GM12878 (cell line): ENCODE measurements at regions of chr12 and their contacts with region 1.

Region 1: DNA sequence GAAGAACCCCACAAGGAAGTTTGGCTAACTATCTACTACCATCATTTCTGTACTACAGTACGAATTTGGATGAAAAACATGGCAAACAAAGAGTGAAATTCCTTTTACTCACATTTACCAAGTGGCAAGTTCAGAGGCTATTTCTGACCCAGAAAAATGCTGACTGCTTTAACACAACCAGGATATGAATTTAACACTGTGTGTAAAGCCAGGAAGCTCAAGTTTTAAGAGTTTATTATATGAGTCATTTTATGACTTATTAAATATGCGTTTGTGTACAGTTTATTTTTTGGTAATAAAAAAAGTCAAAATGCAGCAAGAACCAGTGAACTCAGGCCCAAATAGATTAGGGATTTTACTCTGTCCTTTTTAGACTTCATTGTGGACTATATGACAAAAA is 58.4 kb upstream of the STAC3 start:
- DNase-seq: no peak
- ATAC-seq: no peak
- H3K4me3 ChIP-seq: no peak overlapping the region
- H3K27ac ChIP-seq: no peak overlapping the region
- H3K4me1 ChIP-seq: no peaks in the 10 kb centered on the region
- H3K27me3 ChIP-seq: no peaks in the 10 kb centered on the region
- CTCF ChIP-seq: no peak
- EP300 ChIP-seq: no peak
- POLR2A ChIP-seq: no peak
- RAD21 ChIP-seq: no peak

Region 2: GRCh38 chr12:57229634-57230380 is 79.6 kb before region 1 on chr12 and contains the start of gene SHMT2:
- CTCF ChIA-PET with region 1: no interaction called
- POLR2A ChIA-PET with region 1: no interaction called
- RAD21 ChIA-PET with region 1: no interaction called
- SMC1A ChIA-PET with region 1: no interaction called
- in situ Hi-C with region 1: no loop called
- intact Hi-C with region 1: no loop called
- DNase-seq: peak; percentile 93
- ATAC-seq: peak; percentile 79
- H3K4me3 ChIP-seq: peak within 1 kb of the TSS; percentile 79
- H3K27ac ChIP-seq: peak within 1 kb of the TSS; percentile 93
- H3K4me1 ChIP-seq: peaks cover 31% of the 10 kb centered on the region
- H3K27me3 ChIP-seq: peaks cover 2 to 4% of the 10 kb centered on the region in 2 experiments; a peak in 3 of 4 replicates
- CTCF ChIP-seq: no peak
- EP300 ChIP-seq: no peak
- POLR2A ChIP-seq: peak; percentile 82
- RAD21 ChIP-seq: no peak
- polyA plus RNA-seq, gene SHMT2: 57.0 to 65.6 TPM

Region 3: GRCh38 chr12:57280211-57281062 is 29.0 kb before region 1 on chr12:
- CTCF ChIA-PET with region 1: interaction called, 11 read pairs
- POLR2A ChIA-PET with region 1: interaction called, 9 read pairs
- RAD21 ChIA-PET with region 1: interaction called, 4 read pairs
- SMC1A ChIA-PET with region 1: interaction called, 4 read pairs
- in situ Hi-C with region 1: no loop called
- intact Hi-C with region 1: no loop called
- DNase-seq: peak; percentile 74
- ATAC-seq: peak; percentile 99
- H3K4me3 ChIP-seq: no peak overlapping the region
- H3K27ac ChIP-seq: peak overlapping the region; percentile 61
- H3K4me1 ChIP-seq: peaks cover 12% of the 10 kb centered on the region
- H3K27me3 ChIP-seq: no peaks in the 10 kb centered on the region
- CTCF ChIP-seq: no peak
- EP300 ChIP-seq: 0 out of 4 replicates have a peak, but pooled peaks of 1 of the 2 experiments have one; percentile 6
- POLR2A ChIP-seq: peak; percentile 79
- RAD21 ChIP-seq: no peak

Region 4: DNA sequence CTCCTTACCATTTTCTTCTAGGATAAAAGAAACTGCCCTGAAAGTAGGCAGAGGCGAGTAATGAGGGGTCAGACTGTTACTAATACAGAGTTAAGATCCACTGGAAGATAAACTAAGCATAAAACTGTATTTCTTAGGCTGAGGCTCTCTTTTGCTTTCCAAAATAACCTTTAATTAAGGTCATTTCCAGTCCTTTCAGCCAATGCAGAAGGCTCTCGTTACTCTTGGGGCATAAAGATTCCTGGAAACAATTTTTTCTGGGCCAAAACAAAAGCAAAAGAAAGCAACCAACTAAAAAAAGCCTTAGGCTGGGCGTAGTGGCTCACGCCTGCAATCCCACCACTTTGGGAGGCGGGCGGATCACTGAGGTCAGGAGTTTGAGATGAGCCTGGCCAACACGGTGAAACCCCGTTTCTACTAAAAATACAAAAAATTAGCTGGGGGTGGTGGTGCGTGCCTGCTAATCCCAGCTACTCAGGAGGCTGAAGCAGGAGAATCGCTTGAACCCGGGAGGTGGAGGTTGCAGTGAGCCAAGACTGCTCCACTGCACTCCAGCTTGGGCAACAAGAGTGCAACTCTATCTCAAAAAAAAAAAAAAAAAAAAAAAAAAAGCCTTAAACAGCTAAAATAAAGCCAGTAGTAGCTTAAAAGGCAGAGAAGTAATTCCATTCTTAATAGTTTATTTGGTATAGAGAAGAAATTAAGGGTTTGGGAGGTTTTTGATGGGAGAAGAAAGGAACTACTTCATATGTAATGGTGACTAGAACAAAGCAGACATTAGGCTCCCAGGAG is 10.5 kb after region 1 on chr12:
- CTCF ChIA-PET with region 1: interaction called, 19 read pairs
- POLR2A ChIA-PET with region 1: interaction called, 6 read pairs
- RAD21 ChIA-PET with region 1: interaction called, 4 read pairs
- SMC1A ChIA-PET with region 1: no interaction called
- in situ Hi-C with region 1: no loop called
- intact Hi-C with region 1: no loop called
- DNase-seq: no peak
- ATAC-seq: no peak
- H3K4me3 ChIP-seq: no peak overlapping the region
- H3K27ac ChIP-seq: no peak overlapping the region
- H3K4me1 ChIP-seq: no peaks in the 10 kb centered on the region
- H3K27me3 ChIP-seq: no peaks in the 10 kb centered on the region
- CTCF ChIP-seq: no peak
- EP300 ChIP-seq: no peak
- POLR2A ChIP-seq: no peak
- RAD21 ChIP-seq: no peak

Region 5: GRCh38 chr12:57441846-57442427 is 132.5 kb after region 1 on chr12:
- CTCF ChIA-PET with region 1: interaction called, 11 read pairs
- POLR2A ChIA-PET with region 1: interaction called, 4 read pairs
- RAD21 ChIA-PET with region 1: interaction called, 3 read pairs
- SMC1A ChIA-PET with region 1: interaction called, 3 read pairs
- in situ Hi-C with region 1: no loop called
- intact Hi-C with region 1: no loop called
- DNase-seq: no peak
- ATAC-seq: no peak
- H3K4me3 ChIP-seq: no peak overlapping the region
- H3K27ac ChIP-seq: no peak overlapping the region
- H3K4me1 ChIP-seq: no peaks in the 10 kb centered on the region
- H3K27me3 ChIP-seq: no peaks in the 10 kb centered on the region
- CTCF ChIP-seq: no peak
- EP300 ChIP-seq: no peak
- POLR2A ChIP-seq: no peak
- RAD21 ChIP-seq: no peak